Mammary epithelial cell (primary cell): ENCODE measurements at regions of chr4 and their contacts with region 1.

Region 1: GRCh38 chr4:167622481-167623246 is 388.4 kb upstream of the SPOCK3 start:
- DNase-seq: peak; percentile 34
- H3K4me3 ChIP-seq: no peak overlapping the region
- H3K27ac ChIP-seq: no peak overlapping the region
- H3K4me1 ChIP-seq: no peaks in the 10 kb centered on the region
- H3K27me3 ChIP-seq: no peaks in the 10 kb centered on the region
- CTCF ChIP-seq: peak; percentile 83 to 95

Region 2: GRCh38 chr4:167021545-167022155 is 601.0 kb before region 1 on chr4:
- CTCF ChIA-PET with region 1: no interaction called
- dilution Hi-C with region 1: no loop called
- in situ Hi-C with region 1: loop called in 1 of 2 experiments (anchors 25 kb)
- intact Hi-C with region 1: loop called (anchors 1 kb)
- DNase-seq: peak; percentile 52
- H3K4me3 ChIP-seq: no peak overlapping the region
- H3K27ac ChIP-seq: no peak overlapping the region
- H3K4me1 ChIP-seq: no peaks in the 10 kb centered on the region
- H3K27me3 ChIP-seq: no peaks in the 10 kb centered on the region
- CTCF ChIP-seq: peak; percentile 62 to 82

Region 3: DNA sequence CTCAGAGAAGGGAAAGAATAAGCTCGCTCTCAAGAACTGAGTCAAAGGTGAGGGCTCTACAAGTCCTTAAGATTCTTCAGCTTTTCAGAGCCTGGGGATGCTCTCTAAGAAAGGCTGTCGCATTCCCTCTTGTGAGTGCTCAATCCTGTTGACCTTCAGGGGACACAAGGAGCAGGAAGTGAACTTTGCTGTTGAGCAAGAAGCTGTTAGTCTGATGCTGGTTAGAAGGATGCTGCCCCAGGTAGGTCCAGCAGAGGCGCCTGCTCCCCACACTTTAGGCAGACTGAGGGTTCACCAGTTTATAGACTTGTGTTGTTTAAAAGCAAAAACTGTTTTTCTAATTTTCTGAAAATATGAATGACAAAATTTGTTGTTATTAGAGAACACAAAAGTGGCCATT is 263.0 kb before region 1 on chr4:
- CTCF ChIA-PET with region 1: no interaction called
- dilution Hi-C with region 1: no loop called
- in situ Hi-C with region 1: no loop called
- intact Hi-C with region 1: no loop called
- DNase-seq: no peak
- H3K4me3 ChIP-seq: no peak overlapping the region
- H3K27ac ChIP-seq: no peak overlapping the region
- H3K4me1 ChIP-seq: no peaks in the 10 kb centered on the region
- H3K27me3 ChIP-seq: peaks cover 2% of the 10 kb centered on the region
- CTCF ChIP-seq: no peak

Region 4: DNA sequence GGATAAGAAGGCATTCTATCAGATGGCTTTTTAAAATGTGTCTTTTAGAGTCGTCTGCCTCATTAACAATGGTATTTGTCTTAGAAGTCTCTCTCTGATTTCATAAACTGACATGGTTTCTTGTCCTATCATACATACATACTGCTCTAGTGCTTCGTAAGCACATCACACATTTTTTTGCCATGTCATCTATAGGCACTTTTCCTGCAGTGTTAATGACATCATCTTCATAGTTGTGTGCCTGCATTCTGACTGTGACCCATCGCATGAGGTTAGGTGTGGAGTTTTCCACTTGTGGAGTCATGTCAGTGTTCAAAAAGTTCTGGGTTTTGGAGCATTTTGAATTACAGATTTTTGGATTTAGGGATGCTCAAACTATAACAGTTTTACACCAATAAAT is 26.8 kb before region 1 on chr4:
- CTCF ChIA-PET with region 1: no interaction called
- dilution Hi-C with region 1: no loop called
- in situ Hi-C with region 1: no loop called
- intact Hi-C with region 1: loop called (anchors 1 kb)
- DNase-seq: no peak
- H3K4me3 ChIP-seq: no peak overlapping the region
- H3K27ac ChIP-seq: no peak overlapping the region
- H3K4me1 ChIP-seq: no peaks in the 10 kb centered on the region
- H3K27me3 ChIP-seq: no peaks in the 10 kb centered on the region
- CTCF ChIP-seq: no peak

Region 5: DNA sequence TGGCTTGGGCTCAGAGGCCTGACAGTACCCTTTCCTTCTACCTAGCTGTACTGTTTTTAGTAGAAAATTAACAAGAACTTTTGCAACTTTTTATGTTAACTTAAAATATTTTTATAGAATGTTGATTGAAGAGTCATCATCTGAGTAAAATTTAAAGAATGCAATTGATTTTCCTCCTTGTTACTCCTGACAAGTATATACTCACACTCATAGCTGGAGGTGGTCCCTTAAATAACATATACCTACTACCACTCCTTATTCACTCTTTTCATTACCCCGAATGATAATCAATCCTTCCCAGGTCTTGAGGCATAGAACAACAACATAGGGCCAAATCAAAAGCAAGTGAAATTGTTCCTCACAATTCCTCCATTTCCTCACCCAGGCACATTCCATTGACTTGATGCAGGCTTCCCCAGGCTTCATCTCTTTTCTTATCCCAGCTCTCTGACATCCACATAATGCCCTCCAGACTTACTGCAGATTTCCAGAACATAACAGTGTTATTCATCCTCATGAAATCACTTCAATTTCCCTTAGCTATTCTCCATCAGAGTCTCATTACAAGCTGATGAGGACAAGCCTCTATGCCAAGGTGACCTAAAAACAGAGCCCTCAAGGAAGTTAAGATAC is 396.5 kb after region 1 on chr4:
- CTCF ChIA-PET with region 1: no interaction called
- dilution Hi-C with region 1: no loop called
- in situ Hi-C with region 1: no loop called
- intact Hi-C with region 1: loop called (anchors 10 kb)
- DNase-seq: peak; percentile 32
- H3K4me3 ChIP-seq: no peak overlapping the region
- H3K27ac ChIP-seq: no peak overlapping the region
- H3K4me1 ChIP-seq: peaks cover 15% of the 10 kb centered on the region
- H3K27me3 ChIP-seq: no peaks in the 10 kb centered on the region
- CTCF ChIP-seq: no peak

Region 6: DNA sequence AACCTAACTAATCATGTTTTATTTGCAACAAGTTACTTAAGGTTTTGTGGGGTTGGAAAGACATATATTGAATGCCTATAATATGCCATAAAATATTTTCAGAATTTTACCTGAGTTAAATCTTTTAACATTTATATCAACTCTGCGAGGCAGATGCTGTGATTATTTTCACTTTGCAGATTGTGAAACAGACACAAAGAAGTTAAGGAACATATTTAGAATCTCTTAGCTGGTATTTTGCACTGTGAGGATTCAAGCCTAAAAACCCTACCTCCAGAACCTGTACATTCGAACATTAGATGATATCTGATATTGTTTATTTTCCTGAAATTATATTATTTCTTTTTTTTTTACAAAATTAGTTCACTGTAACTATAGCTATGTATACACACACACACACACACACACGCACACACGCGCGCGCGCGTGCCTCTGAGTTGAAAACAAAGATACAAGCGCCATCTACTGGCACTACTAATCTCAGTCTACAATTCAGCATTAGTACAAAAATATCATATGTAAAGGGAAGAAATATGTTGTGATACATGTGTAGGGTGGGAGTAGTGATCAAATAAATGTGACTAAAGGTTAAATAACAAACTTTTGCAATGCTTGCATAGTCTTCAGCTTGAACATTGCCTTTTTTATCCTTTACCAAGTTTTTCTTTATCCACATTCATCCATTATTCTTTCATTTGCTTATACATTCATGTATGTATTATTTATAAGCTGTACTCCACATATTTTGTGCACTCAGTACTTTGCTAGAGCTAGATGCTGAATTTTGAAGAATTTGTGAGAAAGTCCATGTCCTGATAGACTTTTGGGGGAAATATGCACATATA is 531.2 kb after region 1 on chr4:
- CTCF ChIA-PET with region 1: no interaction called
- dilution Hi-C with region 1: no loop called
- in situ Hi-C with region 1: no loop called
- intact Hi-C with region 1: loop called (anchors 5 kb)
- DNase-seq: peak; percentile 62
- H3K4me3 ChIP-seq: peak overlapping the region; percentile 14 to 44 (median 39)
- H3K27ac ChIP-seq: no peak overlapping the region
- H3K4me1 ChIP-seq: peaks cover 4% of the 10 kb centered on the region
- H3K27me3 ChIP-seq: no peaks in the 10 kb centered on the region
- CTCF ChIP-seq: peak; percentile 76 to 78